ENCODE measurements at regions of chr1 and their contacts with region 1.

Region 1: DNA sequence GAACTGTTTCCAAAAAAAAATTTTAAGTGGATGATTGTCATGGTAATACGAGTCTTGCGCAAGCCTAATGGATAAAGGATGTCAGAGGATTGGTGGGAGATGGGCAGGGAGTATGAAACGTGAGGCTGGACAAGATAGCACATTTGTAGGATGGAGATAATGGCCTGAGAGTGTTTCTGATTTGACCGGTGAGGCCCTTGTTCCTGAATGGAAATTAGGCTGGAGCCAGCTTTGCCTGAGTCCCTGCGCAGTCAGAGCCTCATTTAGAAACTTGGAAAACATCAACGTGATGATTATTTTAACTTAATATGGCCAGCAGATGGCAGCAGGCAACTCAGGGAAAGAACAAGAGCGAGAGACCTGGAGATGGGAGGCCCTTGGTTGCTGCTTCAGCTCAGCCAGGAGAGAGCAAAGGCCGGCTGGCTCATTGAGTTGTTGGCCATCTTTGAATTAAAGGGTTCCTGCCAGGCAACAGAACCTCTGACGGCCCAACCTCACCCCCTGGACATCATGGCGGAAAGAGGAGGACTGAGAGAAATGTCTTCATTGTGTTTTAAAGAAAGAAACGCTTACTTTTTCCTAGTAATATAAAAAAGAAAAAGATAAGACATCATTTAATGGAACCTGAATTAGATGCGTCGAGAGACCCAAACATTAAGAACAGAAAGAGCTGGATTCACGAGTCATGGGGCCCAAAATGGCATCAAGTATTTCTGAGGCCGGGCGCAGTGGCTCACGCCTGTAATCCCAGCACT is 80.3 kb downstream of the SELENOF start:
- DNase-seq: peak; percentile 76
- H3K4me3 Mint-ChIP-seq: no peak overlapping the region
- H3K27ac Mint-ChIP-seq: no peak overlapping the region
- H3K4me1 Mint-ChIP-seq: peaks cover 4% of the 10 kb centered on the region
- H3K27me3 Mint-ChIP-seq: peaks cover 2% of the 10 kb centered on the region

Region 2: GRCh38 chr1:86965012-86965826 is 131.6 kb after region 1 on chr1:
- CTCF ChIA-PET with region 1: interaction called, 5 read pairs
- intact Hi-C with region 1: loop called (anchors 1 kb)
- DNase-seq: peak; percentile 44
- H3K4me3 Mint-ChIP-seq: no peak overlapping the region
- H3K27ac Mint-ChIP-seq: no peak overlapping the region
- H3K4me1 Mint-ChIP-seq: no peaks in the 10 kb centered on the region
- H3K27me3 Mint-ChIP-seq: no peaks in the 10 kb centered on the region

Region 3: DNA sequence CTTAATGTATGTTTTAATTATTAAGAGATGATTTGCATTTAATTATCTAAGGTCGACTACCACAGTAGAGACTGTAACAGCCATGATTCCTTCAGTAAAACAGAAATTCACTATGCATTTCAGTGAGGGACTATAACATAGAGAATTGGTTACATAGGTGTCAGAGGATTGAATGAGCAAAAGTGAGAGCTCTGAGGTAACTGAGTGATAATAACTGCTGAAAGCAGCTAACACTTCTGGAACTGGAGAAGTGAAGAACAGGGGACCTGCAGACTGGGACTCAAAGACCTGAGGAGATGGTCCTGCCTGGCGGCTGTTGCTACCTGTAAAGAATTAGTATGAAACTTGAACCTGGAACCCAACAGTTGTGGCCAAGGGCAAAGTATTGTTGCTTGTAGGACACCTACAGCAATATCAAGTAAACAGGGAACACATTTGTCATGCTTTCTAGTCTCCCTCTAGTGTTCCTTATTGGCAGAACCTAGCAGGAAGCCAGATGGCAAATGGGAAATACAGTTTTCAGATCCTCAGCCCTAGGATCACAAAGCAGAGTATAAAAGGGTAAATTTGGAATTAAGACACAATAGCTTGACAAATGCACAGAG is 191.4 kb after region 1 on chr1:
- CTCF ChIA-PET with region 1: no interaction called
- intact Hi-C with region 1: loop called (anchors 2 kb)
- DNase-seq: no peak
- H3K4me3 Mint-ChIP-seq: no peak overlapping the region
- H3K27ac Mint-ChIP-seq: no peak overlapping the region
- H3K4me1 Mint-ChIP-seq: peaks cover 2% of the 10 kb centered on the region
- H3K27me3 Mint-ChIP-seq: no peaks in the 10 kb centered on the region

Region 4: DNA sequence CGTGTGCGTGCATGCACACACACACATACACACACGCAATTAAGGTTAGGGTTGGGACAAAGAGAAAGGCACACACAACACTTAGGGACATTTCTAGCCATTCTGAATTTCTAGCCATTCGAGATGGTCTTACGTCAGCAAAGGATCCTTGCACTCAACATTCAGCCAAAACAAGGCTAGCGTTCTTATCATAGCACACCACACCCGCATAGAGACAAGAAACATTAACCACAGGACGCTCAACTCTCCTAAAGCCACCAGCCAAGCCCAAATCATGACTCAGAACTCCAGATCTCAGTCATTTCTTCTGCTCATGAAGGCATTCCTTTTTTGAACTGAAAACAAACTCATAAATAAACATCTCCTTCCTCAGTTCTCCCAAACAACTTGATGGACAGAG is 601.8 kb after region 1 on chr1:
- CTCF ChIA-PET with region 1: no interaction called
- intact Hi-C with region 1: no loop called
- DNase-seq: no peak
- H3K4me3 Mint-ChIP-seq: no peak overlapping the region
- H3K27ac Mint-ChIP-seq: no peak overlapping the region
- H3K4me1 Mint-ChIP-seq: peaks cover 3% of the 10 kb centered on the region
- H3K27me3 Mint-ChIP-seq: peaks cover 13% of the 10 kb centered on the region